CD4-positive, alpha-beta memory T cell (primary cell): ENCODE measurements at regions of chr6 and their contacts with region 1.

Region 1: GRCh38 chr6:160520043-160520904 is 143.8 kb downstream of the LPA start:
- DNase-seq: peak; percentile 73 to 81 (median 74)
- H3K4me3 ChIP-seq: peak overlapping the region; percentile 79 to 97
- H3K4me3 Mint-ChIP-seq: peak overlapping the region; percentile 88 to 99 (median 96)
- H3K27ac ChIP-seq: peak overlapping the region; percentile 65
- H3K27ac Mint-ChIP-seq: peak overlapping the region; percentile 87 to 98 (median 96)
- H3K4me1 ChIP-seq: peaks cover 27% of the 10 kb centered on the region
- H3K4me1 Mint-ChIP-seq: peaks cover 35 to 56% (median 48%) of the 10 kb centered on the region in 4 donors
- H3K27me3 ChIP-seq: no peaks in the 10 kb centered on the region
- H3K27me3 Mint-ChIP-seq: no peaks in the 10 kb centered on the region

Region 2: DNA sequence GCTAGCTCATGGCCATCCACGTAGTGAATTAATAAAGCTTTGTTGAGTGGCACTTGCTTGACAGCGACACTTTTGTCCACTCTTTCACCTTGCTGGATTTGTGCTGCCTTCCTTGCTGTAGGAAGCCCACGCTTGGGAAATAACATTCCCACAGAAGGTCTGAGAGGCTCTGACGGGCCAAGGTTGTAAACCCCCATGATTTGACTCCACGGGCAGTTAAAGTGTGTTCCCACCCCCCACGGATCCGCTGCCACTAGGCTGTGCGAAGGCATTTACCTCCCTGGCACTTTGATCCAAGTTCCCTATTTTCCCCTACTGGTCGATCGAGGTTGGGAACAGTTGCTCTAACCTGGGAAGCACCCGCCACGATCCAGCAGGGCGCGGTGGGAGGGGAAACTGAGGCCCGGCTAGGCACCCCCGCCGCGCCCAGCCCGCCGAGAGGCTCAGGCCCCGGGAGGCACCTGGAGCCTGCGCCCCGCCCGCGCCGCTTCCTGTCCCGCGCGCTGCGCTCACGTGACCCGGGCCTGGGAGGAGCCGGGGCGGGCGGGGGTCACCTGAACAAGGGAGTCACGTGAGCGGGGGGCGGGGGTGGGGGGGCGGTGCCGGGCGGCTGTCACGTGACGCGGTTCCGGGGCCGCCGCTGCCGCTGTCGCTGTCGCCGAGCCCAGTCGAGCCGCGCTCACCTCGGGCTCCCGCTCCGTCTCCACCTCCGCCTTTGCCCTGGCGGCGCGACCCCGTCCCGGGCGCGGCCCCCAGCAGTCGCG is 551.7 kb before region 1 on chr6 and contains the start of gene IGF2R:
- CTCF ChIA-PET with region 1: interaction called, 8 read pairs
- POLR2A ChIA-PET with region 1: no interaction called
- intact Hi-C with region 1: loop called (anchors 5 kb)
- DNase-seq: peak; percentile 91 to 94 (median 92)
- H3K4me3 ChIP-seq: peak within 1 kb of the TSS; percentile 61 to 62
- H3K4me3 Mint-ChIP-seq: peak within 1 kb of the TSS; percentile 88 to 96 (median 94)
- H3K27ac ChIP-seq: peak within 1 kb of the TSS; percentile 75
- H3K27ac Mint-ChIP-seq: peak within 1 kb of the TSS; percentile 92 to 97 (median 94)
- H3K4me1 ChIP-seq: peaks cover 44% of the 10 kb centered on the region
- H3K4me1 Mint-ChIP-seq: peaks cover 29 to 45% (median 38%) of the 10 kb centered on the region in 4 donors
- H3K27me3 ChIP-seq: no peaks in the 10 kb centered on the region
- H3K27me3 Mint-ChIP-seq: no peaks in the 10 kb centered on the region
- total RNA-seq, gene IGF2R: 77.5 to 79.2 TPM

Region 3: DNA sequence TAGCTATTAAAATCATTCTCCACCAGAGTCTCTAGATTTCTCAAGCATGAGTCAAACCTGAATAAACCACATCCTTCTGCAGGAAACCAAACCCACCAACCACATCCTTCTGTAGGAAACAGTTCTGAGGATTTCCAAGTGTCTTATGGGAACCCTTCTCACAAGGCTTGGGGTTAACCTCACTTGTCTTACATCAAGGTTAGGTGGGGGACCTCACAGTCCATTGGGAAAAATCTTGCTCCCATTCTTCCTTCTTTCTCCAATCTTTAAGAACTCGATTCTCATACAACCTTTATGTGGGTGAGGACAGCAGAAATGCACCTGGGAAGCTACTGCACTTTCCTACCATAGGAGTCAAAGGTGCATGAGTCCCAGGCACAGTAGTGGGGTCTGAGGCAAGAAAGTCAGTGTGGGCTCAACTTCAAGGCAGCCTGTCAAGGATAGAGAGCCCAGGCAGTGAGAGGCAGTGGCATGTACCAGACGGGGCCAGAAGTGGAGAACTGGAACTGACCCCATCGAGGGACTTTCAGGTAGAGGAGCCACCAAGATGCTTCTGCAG is 57.6 kb before region 1 on chr6:
- CTCF ChIA-PET with region 1: interaction called, 6 read pairs
- POLR2A ChIA-PET with region 1: interaction called, 11 read pairs
- intact Hi-C with region 1: loop called (anchors 1 kb)
- DNase-seq: peak; percentile 82 to 90 (median 86)
- H3K4me3 ChIP-seq: peak overlapping the region; percentile 23 to 39
- H3K4me3 Mint-ChIP-seq: peak overlapping the region; percentile 51 to 86 (median 73)
- H3K27ac ChIP-seq: no peak overlapping the region
- H3K27ac Mint-ChIP-seq: peak overlapping the region; percentile 25 to 90 (median 85)
- H3K4me1 ChIP-seq: peaks cover 76% of the 10 kb centered on the region
- H3K4me1 Mint-ChIP-seq: peaks cover 60 to 80% (median 71%) of the 10 kb centered on the region in 4 donors
- H3K27me3 ChIP-seq: no peaks in the 10 kb centered on the region
- H3K27me3 Mint-ChIP-seq: no peaks in the 10 kb centered on the region

Region 4: DNA sequence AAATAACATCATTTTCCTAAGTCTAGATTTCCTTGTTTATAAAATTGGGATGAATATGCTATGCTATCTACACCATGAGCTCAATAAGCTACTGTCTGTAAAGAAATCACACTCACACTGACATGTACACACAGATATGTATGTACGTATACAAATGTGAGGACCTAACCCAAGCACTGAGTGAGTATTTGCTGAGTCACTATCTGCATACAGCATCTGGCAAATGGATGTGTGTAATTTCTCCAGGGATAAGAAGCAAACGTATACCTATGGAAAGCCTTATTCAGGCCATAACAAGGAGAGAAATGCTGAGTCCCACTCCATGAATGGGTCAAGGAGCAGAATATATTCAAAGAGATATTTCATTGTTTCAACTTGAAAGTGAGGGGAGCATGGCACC is 10.1 kb before region 1 on chr6:
- CTCF ChIA-PET with region 1: interaction called, 22 read pairs
- POLR2A ChIA-PET with region 1: no interaction called
- intact Hi-C with region 1: no loop called
- DNase-seq: no peak
- H3K4me3 ChIP-seq: no peak overlapping the region
- H3K4me3 Mint-ChIP-seq: no peak overlapping the region
- H3K27ac ChIP-seq: no peak overlapping the region
- H3K27ac Mint-ChIP-seq: no peak overlapping the region
- H3K4me1 ChIP-seq: no peaks in the 10 kb centered on the region
- H3K4me1 Mint-ChIP-seq: peaks cover 6 to 19% (median 10%) of the 10 kb centered on the region in 4 donors
- H3K27me3 ChIP-seq: no peaks in the 10 kb centered on the region
- H3K27me3 Mint-ChIP-seq: no peaks in the 10 kb centered on the region

Region 5: DNA sequence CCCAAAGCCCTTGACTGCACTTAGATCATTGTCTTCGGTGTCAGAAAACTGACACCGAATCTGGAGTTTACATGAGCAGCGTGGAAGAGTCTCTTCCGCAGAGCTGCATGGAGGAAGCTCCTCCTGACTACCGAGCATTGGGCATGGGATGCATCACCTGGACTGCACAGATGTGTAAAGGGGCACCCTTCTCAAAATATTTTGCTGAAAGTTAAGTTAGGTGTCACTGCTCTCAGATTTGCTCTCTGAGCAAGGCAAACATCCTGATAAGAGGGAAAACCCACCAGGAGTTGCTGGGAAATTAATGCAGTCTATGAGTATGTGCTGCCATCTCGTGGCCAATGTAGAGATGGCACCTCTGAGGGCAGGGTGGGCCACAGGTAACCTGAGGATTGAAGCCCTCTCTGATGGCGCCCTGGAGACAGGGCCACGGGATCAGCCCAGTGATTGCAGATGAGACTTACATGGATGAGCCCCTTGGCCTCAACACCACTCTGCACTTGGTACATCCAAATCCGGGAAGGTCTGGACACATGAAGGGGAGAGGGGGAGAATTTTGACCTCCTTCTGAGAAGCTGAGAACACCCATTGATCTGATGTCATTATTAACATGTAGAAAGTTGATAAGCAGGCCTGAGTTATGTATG is 13.9 kb after region 1 on chr6:
- CTCF ChIA-PET with region 1: interaction called, 226 read pairs
- POLR2A ChIA-PET with region 1: interaction called, 14 read pairs
- intact Hi-C with region 1: loop called (anchors 1 kb)
- DNase-seq: peak; percentile 41 to 58 (median 45)
- H3K4me3 ChIP-seq: no peak overlapping the region
- H3K4me3 Mint-ChIP-seq: no peak overlapping the region
- H3K27ac ChIP-seq: no peak overlapping the region
- H3K27ac Mint-ChIP-seq: no peak overlapping the region
- H3K4me1 ChIP-seq: peaks cover 8% of the 10 kb centered on the region
- H3K4me1 Mint-ChIP-seq: no peaks in the 10 kb centered on the region
- H3K27me3 ChIP-seq: no peaks in the 10 kb centered on the region
- H3K27me3 Mint-ChIP-seq: peaks cover 0 to 2% of the 10 kb centered on the region in 2 donors

Region 6: GRCh38 chr6:160766989-160767660 is 246.9 kb after region 1 on chr6:
- CTCF ChIA-PET with region 1: no interaction called
- POLR2A ChIA-PET with region 1: no interaction called
- intact Hi-C with region 1: loop called (anchors 2 kb)
- DNase-seq: peak; percentile 22 to 41 (median 35)
- H3K4me3 ChIP-seq: no peak overlapping the region
- H3K4me3 Mint-ChIP-seq: peak overlapping the region; percentile 59 to 85 (median 75)
- H3K27ac ChIP-seq: no peak overlapping the region
- H3K27ac Mint-ChIP-seq: no peak overlapping the region
- H3K4me1 ChIP-seq: no peaks in the 10 kb centered on the region
- H3K4me1 Mint-ChIP-seq: peaks cover 3 to 8% (median 6%) of the 10 kb centered on the region in 4 donors
- H3K27me3 ChIP-seq: no peaks in the 10 kb centered on the region
- H3K27me3 Mint-ChIP-seq: peaks cover 21 to 23% of the 10 kb centered on the region in 2 donors

Region 7: GRCh38 chr6:161066511-161066910 is 546.2 kb after region 1 on chr6:
- CTCF ChIA-PET with region 1: no interaction called
- POLR2A ChIA-PET with region 1: no interaction called
- intact Hi-C with region 1: no loop called
- DNase-seq: no peak
- H3K4me3 ChIP-seq: no peak overlapping the region
- H3K4me3 Mint-ChIP-seq: no peak overlapping the region
- H3K27ac ChIP-seq: no peak overlapping the region
- H3K27ac Mint-ChIP-seq: peak overlapping the region in 3 of 7 donors; percentile 5 to 74 (median 72)
- H3K4me1 ChIP-seq: peaks cover 5% of the 10 kb centered on the region
- H3K4me1 Mint-ChIP-seq: peaks cover 11 to 29% (median 25%) of the 10 kb centered on the region in 4 donors
- H3K27me3 ChIP-seq: no peaks in the 10 kb centered on the region
- H3K27me3 Mint-ChIP-seq: no peaks in the 10 kb centered on the region